IMR-90 (cell line): ENCODE measurements at regions of chr22 and their contacts with region 1.

Region 1: DNA sequence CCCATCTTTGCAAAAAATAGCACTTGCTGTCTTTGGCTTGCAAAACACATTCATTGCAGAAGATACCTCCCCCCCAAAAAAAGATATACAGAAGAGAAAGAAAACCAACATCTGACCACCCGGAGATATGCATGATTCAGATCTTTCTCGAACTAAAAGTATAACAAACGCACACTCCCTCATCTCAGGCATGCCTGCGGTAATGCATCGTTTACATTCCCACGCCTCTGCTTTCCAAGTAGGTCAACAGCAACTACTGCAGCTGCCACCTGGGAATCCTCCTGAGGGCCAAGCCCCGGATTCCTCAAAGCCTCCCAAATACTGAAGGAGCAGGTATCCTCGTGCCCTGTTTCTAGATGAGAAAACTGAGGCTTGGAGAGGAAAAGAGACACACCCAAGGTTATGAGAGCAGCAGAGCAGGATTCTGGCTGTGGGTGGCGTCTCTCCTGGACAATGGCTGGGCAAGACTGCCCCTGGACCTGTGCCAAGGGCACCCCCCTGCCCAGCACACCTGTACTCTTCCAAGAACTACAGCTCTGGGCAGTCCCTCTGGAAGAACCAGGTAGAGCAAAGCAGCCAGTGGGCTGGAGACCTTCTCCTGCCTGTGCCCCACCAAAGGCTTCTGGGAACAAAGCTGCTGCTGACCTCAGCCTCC is 38.1 kb downstream of the NUP50 start:
- DNase-seq: peak; percentile 100
- ATAC-seq: peak; percentile 88
- H3K4me3 ChIP-seq: no peak overlapping the region
- H3K27ac ChIP-seq: peak overlapping the region; percentile 38
- H3K4me1 ChIP-seq: peaks cover 21% of the 10 kb centered on the region
- H3K27me3 ChIP-seq: no peaks in the 10 kb centered on the region
- CTCF ChIP-seq: no peak
- POLR2A ChIP-seq: no peak
- RAD21 ChIP-seq: no peak; the same call in 1 of the 2 replicates

Region 2: GRCh38 chr22:45163451-45164269 is 38.1 kb before region 1 on chr22 and contains the start of gene NUP50:
- CTCF ChIA-PET with region 1: no interaction called
- POLR2A ChIA-PET with region 1: no interaction called
- dilution Hi-C with region 1: no loop called
- in situ Hi-C with region 1: no loop called
- intact Hi-C with region 1: loop called (anchors 1 kb)
- DNase-seq: peak; percentile 96
- ATAC-seq: peak; percentile 90
- H3K4me3 ChIP-seq: peak within 1 kb of the TSS; percentile 88
- H3K27ac ChIP-seq: peak within 1 kb of the TSS; percentile 84
- H3K4me1 ChIP-seq: peaks cover 11% of the 10 kb centered on the region
- H3K27me3 ChIP-seq: no peaks in the 10 kb centered on the region
- CTCF ChIP-seq: peak; percentile 19; the same call in 1 of the 2 replicates
- POLR2A ChIP-seq: peak; percentile 92
- RAD21 ChIP-seq: peak; percentile 29
- total RNA-seq, gene NUP50: 61.1 and 65.4 TPM in 2 replicates

Region 3: DNA sequence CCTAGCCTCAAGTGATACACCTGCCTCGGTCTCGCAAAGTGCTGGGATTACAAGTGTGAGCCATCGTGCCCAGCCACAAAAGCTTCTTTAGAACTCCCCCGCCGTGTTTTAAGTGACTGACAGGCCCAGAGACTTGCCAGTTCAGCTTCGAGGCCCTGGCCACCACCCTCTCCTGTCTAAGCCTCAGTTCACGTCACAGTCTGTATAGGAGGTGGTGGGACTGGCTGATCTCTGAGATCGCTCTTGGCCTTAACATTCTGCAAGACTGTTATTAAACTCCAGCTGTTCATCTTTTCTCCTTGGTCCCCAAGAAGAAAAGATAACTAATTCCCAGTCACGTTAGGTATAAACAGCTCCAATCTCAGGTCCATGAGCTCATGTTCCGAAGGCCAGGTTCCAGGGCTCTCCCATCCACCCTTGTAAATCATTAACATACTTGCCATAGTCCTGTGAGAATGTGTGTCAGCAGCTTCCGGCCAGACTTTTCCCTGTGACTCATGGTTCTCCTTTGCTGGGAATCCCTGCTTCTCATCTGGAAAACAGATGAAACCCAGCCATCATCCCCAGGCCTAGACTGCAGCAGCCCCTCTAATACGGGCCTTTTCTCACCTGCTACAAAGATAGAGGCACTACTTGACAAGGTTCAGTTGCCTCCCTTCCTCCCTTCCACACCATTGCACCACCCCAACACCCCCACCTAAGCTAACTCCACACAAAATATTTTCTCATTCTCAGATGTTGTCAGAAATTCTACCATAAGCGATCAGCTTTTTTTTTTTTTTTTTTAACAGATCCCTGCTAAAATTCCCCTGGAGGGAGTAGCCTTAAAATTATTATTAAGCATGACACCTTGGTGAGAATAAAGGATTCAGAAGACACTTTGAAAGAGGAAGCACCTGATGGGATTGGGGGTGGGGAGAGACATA is 44.5 kb after region 1 on chr22:
- CTCF ChIA-PET with region 1: no interaction called
- POLR2A ChIA-PET with region 1: no interaction called
- dilution Hi-C with region 1: no loop called
- in situ Hi-C with region 1: no loop called
- intact Hi-C with region 1: loop called (anchors 1 kb)
- DNase-seq: peak; percentile 99
- ATAC-seq: peak; percentile 93
- H3K4me3 ChIP-seq: no peak overlapping the region
- H3K27ac ChIP-seq: peak overlapping the region; percentile 51
- H3K4me1 ChIP-seq: peaks cover 9% of the 10 kb centered on the region; the same call in 1 of the 2 replicates
- H3K27me3 ChIP-seq: no peaks in the 10 kb centered on the region
- CTCF ChIP-seq: no peak
- POLR2A ChIP-seq: no peak
- RAD21 ChIP-seq: no peak

Region 4: GRCh38 chr22:45271667-45272201 is 69.9 kb after region 1 on chr22:
- CTCF ChIA-PET with region 1: no interaction called
- POLR2A ChIA-PET with region 1: no interaction called
- dilution Hi-C with region 1: no loop called
- in situ Hi-C with region 1: no loop called
- intact Hi-C with region 1: no loop called
- DNase-seq: no peak
- ATAC-seq: no peak
- H3K4me3 ChIP-seq: no peak overlapping the region
- H3K27ac ChIP-seq: no peak overlapping the region; the same call in 1 of the 2 replicates
- H3K4me1 ChIP-seq: peaks cover 9% of the 10 kb centered on the region
- H3K27me3 ChIP-seq: peaks cover 8% of the 10 kb centered on the region
- CTCF ChIP-seq: no peak
- POLR2A ChIP-seq: no peak
- RAD21 ChIP-seq: no peak

Region 5: GRCh38 chr22:45318168-45318557 is 116.4 kb after region 1 on chr22:
- CTCF ChIA-PET with region 1: no interaction called
- POLR2A ChIA-PET with region 1: no interaction called
- dilution Hi-C with region 1: no loop called
- in situ Hi-C with region 1: no loop called
- intact Hi-C with region 1: no loop called
- DNase-seq: peak; percentile 97
- ATAC-seq: peak; percentile 79
- H3K4me3 ChIP-seq: peak overlapping the region; percentile 10; the same call in 1 of the 2 replicates
- H3K27ac ChIP-seq: peak overlapping the region; percentile 75
- H3K4me1 ChIP-seq: peaks cover 22% of the 10 kb centered on the region
- H3K27me3 ChIP-seq: no peaks in the 10 kb centered on the region
- CTCF ChIP-seq: no peak
- POLR2A ChIP-seq: 0 out of 2 replicates have a peak, but pooled peaks have one; percentile 10
- RAD21 ChIP-seq: no peak